ENCODE measurements at regions of chr14 and their contacts with region 1.

Region 1: DNA sequence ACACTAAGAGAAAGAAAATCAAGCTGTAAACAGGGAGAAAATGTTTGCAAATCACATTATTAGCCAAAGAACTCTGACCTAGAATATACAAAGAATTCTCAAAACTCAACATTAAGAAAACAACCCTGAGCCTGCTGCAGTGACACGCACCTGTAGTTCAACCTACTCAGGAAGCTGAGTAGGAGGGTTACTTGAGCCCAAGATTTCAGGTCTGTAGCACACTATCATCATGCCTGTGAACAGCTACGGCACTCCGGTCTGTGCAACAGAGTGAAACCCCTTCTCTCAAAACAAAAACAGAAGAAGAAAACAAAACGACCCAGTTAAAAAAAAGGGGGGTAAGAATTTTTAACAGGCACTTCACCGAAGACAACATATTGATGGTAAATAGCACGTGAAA is 20.8 kb downstream of the SAV1 start:
- DNase-seq: no peak
- ATAC-seq: no peak
- H3K4me3 ChIP-seq: no peak overlapping the region
- H3K27ac ChIP-seq: no peak overlapping the region
- H3K4me1 ChIP-seq: peaks cover 3 to 47% (median 25%) of the 10 kb centered on the region in 9 donors
- H3K27me3 ChIP-seq: no peaks in the 10 kb centered on the region
- CTCF ChIP-seq: no peak

Region 2: GRCh38 chr14:50704454-50705010 is 57.2 kb after region 1 on chr14:
- intact Hi-C with region 1: loop called in 1 of 10 experiments (anchors 10 kb)
- DNase-seq: no peak
- ATAC-seq: peak in 3 of 8 donors; percentile 27 to 53 (median 31)
- H3K4me3 ChIP-seq: no peak overlapping the region
- H3K27ac ChIP-seq: no peak overlapping the region
- H3K4me1 ChIP-seq: no peaks in the 10 kb centered on the region
- H3K27me3 ChIP-seq: no peaks in the 10 kb centered on the region
- CTCF ChIP-seq: no peak